ENCODE measurements at regions of chr2 and their contacts with region 1.

Region 1: DNA sequence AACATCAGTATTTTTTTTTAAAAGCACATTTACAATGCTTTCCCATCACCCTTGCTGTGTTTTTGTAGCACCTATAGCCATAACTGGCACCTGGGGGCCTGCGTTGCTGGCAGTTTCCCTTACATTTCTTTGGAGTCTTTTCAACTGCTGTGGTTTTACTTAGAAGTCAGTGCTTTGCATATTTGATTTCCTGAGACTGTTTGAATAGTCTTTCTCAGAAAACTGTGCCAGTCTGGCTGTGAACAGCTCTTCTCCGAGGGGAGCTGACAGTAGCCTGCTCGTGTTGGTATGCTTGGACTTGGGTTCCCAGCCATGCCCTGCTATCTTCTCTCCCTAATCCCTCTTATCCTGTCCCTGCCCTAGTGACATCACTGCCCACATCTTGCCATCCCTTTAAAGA is 81.5 kb downstream of the DPP4 start:
- DNase-seq: peak in 2 of 3 donors; percentile 30 to 40
- H3K4me3 ChIP-seq: peak overlapping the region in 6 of 7 experiments; percentile 16 to 69 (median 56)
- H3K27ac ChIP-seq: peak overlapping the region; percentile 56 to 69
- H3K4me1 ChIP-seq: peaks cover 11 to 54% (median 40%) of the 10 kb centered on the region in 4 experiments
- H3K27me3 ChIP-seq: no peaks in the 10 kb centered on the region

Region 2: GRCh38 chr2:162004031-162004430 is 11.5 kb after region 1 on chr2:
- CTCF ChIA-PET with region 1: interaction called, 11 read pairs
- POLR2A ChIA-PET with region 1: no interaction called
- DNase-seq: peak in 1 of 3 donors; percentile 41
- H3K4me3 ChIP-seq: no peak overlapping the region
- H3K27ac ChIP-seq: no peak overlapping the region
- H3K4me1 ChIP-seq: peaks cover 0 to 20% (median 3%) of the 10 kb centered on the region in 4 experiments
- H3K27me3 ChIP-seq: no peaks in the 10 kb centered on the region

Measured in common myeloid progenitor, CD34-positive (primary cell).